Right ventricle myocardium inferior (tissue), 1 donor: ENCODE measurements at regions of chr6 and their contacts with region 1.

Region 1: DNA sequence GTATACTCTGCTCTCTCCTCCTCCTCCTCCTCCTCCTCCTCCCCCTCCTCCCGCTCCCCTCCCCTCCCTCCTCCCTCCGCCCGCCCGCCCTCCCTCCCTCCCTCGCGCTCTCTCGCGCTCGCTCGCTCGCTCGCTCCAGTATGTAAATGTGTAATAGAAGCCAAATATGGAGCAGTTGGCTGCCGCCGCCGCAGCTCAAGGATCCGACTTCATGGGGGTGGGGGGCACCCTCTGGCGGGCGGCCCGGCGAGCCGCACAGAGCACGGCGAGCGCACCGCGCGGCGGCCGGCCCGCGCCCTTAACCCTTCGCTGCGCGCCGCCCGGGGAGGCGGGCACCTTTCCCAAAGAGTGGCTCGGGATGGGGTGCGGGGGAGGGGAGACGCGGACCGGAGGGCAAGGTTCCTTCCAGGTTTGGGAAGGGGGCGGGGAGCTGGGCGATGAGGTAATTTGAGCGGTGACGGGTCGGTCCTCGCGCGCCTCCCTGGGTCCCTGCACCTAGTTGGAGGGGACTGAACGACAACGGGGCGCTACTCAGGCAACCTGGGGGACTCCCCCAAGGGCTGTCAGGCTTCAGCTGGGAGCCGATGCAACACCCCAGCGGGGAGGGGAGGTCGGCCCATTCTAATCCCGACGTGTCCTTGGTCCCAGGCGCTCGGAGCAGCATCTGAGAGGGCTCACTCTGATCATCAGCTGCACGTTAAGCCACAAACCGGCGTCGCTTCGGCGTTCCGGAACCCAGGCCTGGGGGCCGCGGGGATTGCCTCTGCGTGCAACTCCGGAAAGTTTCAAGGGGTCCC is 409 bp upstream of the ATXN1 start:
- DNase-seq: peak; percentile 94
- ATAC-seq: peak; percentile 53

Region 2: DNA sequence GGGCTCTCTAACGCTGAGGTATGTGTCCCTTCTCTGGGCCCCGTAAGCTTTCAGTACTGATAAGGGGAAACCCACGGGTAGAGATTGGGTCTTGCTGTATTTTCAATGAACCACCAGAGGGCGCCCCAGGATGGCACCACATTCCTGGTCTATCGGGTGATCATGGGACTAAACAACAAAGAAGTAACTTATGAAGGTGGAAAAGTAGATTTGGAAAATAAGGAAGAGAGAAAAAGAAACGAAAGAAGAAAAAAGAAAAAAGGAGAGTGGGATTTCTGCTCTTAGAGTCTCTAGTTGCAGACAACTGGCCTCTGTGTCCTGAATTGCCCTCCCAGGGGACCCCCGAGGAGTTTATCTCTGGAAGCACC is 429.5 kb before region 1 on chr6:
- intact Hi-C with region 1: loop called (anchors 2 kb)
- DNase-seq: peak; percentile 89
- ATAC-seq: peak; percentile 80

Region 3: GRCh38 chr6:16514249-16514648 is 247.4 kb before region 1 on chr6:
- intact Hi-C with region 1: loop called (anchors 2 kb)
- DNase-seq: no peak
- ATAC-seq: peak; percentile 38

Region 4: GRCh38 chr6:16670183-16670582 is 91.5 kb before region 1 on chr6:
- intact Hi-C with region 1: loop called (anchors 5 kb)
- DNase-seq: peak; percentile 66
- ATAC-seq: peak; percentile 86